GM12878 (cell line): ENCODE measurements at regions of chr11 and their contacts with region 1.

Region 1: DNA sequence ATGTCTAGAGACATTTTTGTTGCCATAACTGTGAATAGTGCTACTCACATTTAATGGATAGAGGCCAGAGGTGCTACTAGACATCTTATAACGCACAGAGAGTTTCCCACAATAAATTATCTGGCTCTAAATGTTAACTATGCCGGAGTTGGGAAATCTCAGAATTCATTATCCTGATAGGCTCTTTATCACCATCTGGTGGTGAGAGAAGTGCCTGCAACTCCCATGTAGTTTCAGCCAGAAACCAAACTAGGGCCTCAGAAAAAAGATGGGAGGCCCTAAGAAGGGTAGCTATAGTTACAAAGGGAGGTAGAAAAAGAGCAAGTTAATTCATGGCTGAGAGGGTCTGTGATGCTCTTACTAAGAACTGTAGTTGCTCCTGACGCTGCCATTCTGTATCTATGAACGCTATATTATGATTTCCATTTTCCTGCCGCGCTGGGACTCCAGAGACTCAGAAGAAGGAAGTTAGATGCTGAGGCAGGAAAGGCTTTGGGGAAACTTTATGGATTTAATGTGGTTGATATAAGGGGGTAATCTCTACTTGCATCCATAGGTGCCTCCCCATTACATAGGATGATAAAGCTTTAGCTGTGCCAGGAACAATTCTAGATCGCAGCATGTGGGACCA is 22.9 kb upstream of the MRPL17 start:
- DNase-seq: no peak
- ATAC-seq: peak; percentile 83
- H3K4me3 ChIP-seq: no peak overlapping the region
- H3K27ac ChIP-seq: no peak overlapping the region
- H3K4me1 ChIP-seq: no peaks in the 10 kb centered on the region
- H3K27me3 ChIP-seq: no peaks in the 10 kb centered on the region
- CTCF ChIP-seq: peak; percentile 77 to 92 (median 84)
- EP300 ChIP-seq: no peak
- POLR2A ChIP-seq: no peak
- RAD21 ChIP-seq: peak; percentile 71

Region 2: DNA sequence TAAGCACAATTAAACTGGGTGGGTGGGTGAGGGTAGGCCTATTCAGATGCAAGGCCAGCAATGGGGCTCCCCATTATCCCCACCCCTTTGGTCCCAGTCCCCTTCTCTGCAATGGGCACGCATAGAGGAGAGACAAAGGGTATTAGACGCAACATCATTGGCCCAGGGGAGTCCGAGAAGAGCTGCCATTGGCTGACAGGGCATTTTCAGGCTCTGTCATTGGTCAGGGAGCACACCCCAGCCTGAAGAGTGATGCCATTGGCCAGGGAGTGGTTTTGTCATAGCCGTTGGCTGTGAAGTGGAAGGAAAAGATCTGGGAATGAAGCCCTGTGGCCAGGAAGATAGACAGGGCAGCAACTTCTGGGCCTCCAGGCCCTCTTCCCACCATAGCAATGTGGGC is 229.4 kb before region 1 on chr11:
- CTCF ChIA-PET with region 1: no interaction called
- POLR2A ChIA-PET with region 1: no interaction called
- RAD21 ChIA-PET with region 1: no interaction called
- SMC1A ChIA-PET with region 1: no interaction called
- in situ Hi-C with region 1: no loop called
- intact Hi-C with region 1: no loop called
- DNase-seq: no peak
- ATAC-seq: no peak
- H3K4me3 ChIP-seq: no peak overlapping the region
- H3K27ac ChIP-seq: no peak overlapping the region
- H3K4me1 ChIP-seq: peaks cover 14% of the 10 kb centered on the region
- H3K27me3 ChIP-seq: no peaks in the 10 kb centered on the region
- CTCF ChIP-seq: no peak
- EP300 ChIP-seq: no peak
- POLR2A ChIP-seq: no peak
- RAD21 ChIP-seq: no peak

Region 3: DNA sequence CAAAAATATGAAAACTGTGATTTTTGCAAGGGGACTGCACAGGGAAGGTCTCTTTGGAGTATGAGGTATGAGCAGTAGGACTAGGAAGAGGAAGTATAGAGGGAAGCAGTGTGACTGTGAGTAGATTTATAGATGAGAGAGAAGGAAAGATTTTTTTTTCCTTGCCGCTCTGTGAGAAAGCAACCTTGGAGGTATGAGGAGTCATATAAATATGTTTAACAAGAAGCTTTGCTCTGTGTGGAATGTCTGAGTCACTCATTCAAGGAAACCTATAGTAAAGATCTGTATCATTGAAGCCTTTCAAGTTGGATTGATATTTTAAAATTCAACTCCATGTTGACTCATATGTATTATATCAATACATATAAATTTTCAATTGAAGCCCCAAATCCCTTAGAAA is 182.8 kb before region 1 on chr11:
- CTCF ChIA-PET with region 1: interaction called, 10 read pairs
- POLR2A ChIA-PET with region 1: no interaction called
- RAD21 ChIA-PET with region 1: no interaction called
- SMC1A ChIA-PET with region 1: interaction called, 8 read pairs
- in situ Hi-C with region 1: no loop called
- intact Hi-C with region 1: no loop called
- DNase-seq: no peak
- ATAC-seq: no peak
- H3K4me3 ChIP-seq: no peak overlapping the region
- H3K27ac ChIP-seq: no peak overlapping the region
- H3K4me1 ChIP-seq: peaks cover 12% of the 10 kb centered on the region; the same call in 1 of the 2 replicates
- H3K27me3 ChIP-seq: no peaks in the 10 kb centered on the region
- CTCF ChIP-seq: no peak
- EP300 ChIP-seq: no peak
- POLR2A ChIP-seq: no peak
- RAD21 ChIP-seq: no peak

Region 4: DNA sequence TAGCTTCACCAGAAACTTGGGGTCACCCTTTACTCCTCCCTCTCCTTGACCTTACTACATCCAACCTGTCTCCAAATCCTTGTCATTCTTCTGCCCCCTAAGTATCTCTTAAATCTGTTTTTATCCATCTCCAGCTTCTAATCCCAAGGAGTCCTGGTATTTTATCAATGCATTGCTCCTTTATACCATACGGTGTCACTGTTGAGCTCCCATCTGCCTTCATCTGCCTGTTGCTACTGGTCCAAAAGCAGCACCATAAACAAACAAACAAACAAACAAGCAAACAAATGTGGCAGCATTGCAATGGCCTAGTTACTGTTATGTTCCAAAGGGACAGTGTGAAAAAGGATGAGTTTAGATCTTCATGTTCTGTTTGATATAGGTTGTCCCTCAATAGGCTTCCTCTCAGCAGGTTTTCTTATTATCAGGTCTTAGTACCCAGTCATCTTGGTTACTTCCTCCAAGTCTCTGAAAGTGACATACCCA is 174.7 kb before region 1 on chr11:
- CTCF ChIA-PET with region 1: interaction called, 80 read pairs
- POLR2A ChIA-PET with region 1: no interaction called
- RAD21 ChIA-PET with region 1: interaction called, 25 read pairs
- SMC1A ChIA-PET with region 1: interaction called, 25 read pairs
- in situ Hi-C with region 1: no loop called
- intact Hi-C with region 1: loop called (anchors 1 kb)
- DNase-seq: peak; percentile 27
- ATAC-seq: peak; percentile 80
- H3K4me3 ChIP-seq: no peak overlapping the region
- H3K27ac ChIP-seq: no peak overlapping the region
- H3K4me1 ChIP-seq: peaks cover 8% of the 10 kb centered on the region; the same call in 1 of the 2 replicates
- H3K27me3 ChIP-seq: no peaks in the 10 kb centered on the region
- CTCF ChIP-seq: peak; percentile 66 to 73 (median 70)
- EP300 ChIP-seq: no peak
- POLR2A ChIP-seq: no peak
- RAD21 ChIP-seq: peak; percentile 89

Region 5: GRCh38 chr11:6586434-6587359 is 119.3 kb before region 1 on chr11:
- CTCF ChIA-PET with region 1: no interaction called
- POLR2A ChIA-PET with region 1: no interaction called
- RAD21 ChIA-PET with region 1: no interaction called
- SMC1A ChIA-PET with region 1: no interaction called
- in situ Hi-C with region 1: no loop called
- intact Hi-C with region 1: no loop called
- DNase-seq: no peak
- ATAC-seq: no peak
- H3K4me3 ChIP-seq: no peak overlapping the region
- H3K27ac ChIP-seq: no peak overlapping the region
- H3K4me1 ChIP-seq: no peaks in the 10 kb centered on the region
- H3K27me3 ChIP-seq: no peaks in the 10 kb centered on the region
- CTCF ChIP-seq: no peak
- EP300 ChIP-seq: no peak
- POLR2A ChIP-seq: no peak
- RAD21 ChIP-seq: no peak

Region 6: GRCh38 chr11:6693342-6694228 is 12.4 kb before region 1 on chr11:
- CTCF ChIA-PET with region 1: interaction called, 9 read pairs
- POLR2A ChIA-PET with region 1: no interaction called
- RAD21 ChIA-PET with region 1: interaction called, 3 read pairs
- SMC1A ChIA-PET with region 1: interaction called, 12 read pairs
- in situ Hi-C with region 1: no loop called
- intact Hi-C with region 1: no loop called
- DNase-seq: no peak
- ATAC-seq: no peak
- H3K4me3 ChIP-seq: no peak overlapping the region
- H3K27ac ChIP-seq: no peak overlapping the region
- H3K4me1 ChIP-seq: no peaks in the 10 kb centered on the region
- H3K27me3 ChIP-seq: no peaks in the 10 kb centered on the region
- CTCF ChIP-seq: no peak
- EP300 ChIP-seq: no peak
- POLR2A ChIP-seq: no peak
- RAD21 ChIP-seq: no peak

Region 7: GRCh38 chr11:6737872-6738466 is 31.9 kb after region 1 on chr11:
- CTCF ChIA-PET with region 1: interaction called, 13 read pairs
- POLR2A ChIA-PET with region 1: interaction called, 3 read pairs
- RAD21 ChIA-PET with region 1: no interaction called
- SMC1A ChIA-PET with region 1: interaction called, 3 read pairs
- in situ Hi-C with region 1: no loop called
- intact Hi-C with region 1: no loop called
- DNase-seq: no peak
- ATAC-seq: peak; percentile 87
- H3K4me3 ChIP-seq: no peak overlapping the region
- H3K27ac ChIP-seq: no peak overlapping the region
- H3K4me1 ChIP-seq: peaks cover 27% of the 10 kb centered on the region
- H3K27me3 ChIP-seq: no peaks in the 10 kb centered on the region
- CTCF ChIP-seq: peak; percentile 67 to 80 (median 73)
- EP300 ChIP-seq: no peak
- POLR2A ChIP-seq: no peak
- RAD21 ChIP-seq: peak; percentile 68